ENCODE measurements at regions of chr2 and their contacts with region 1.

Region 1: GRCh38 chr2:96174251-96175144 is 29.3 kb upstream of the DUSP2 start:
- DNase-seq: peak; percentile 72 to 75
- ATAC-seq: peak; percentile 97 to 99
- H3K4me3 ChIP-seq: no peak overlapping the region
- H3K27ac ChIP-seq: no peak overlapping the region
- H3K4me1 ChIP-seq: no peaks in the 10 kb centered on the region
- CTCF ChIP-seq: peak; percentile 83
- EP300 ChIP-seq: no peak
- POLR2A ChIP-seq: no peak
- RAD21 ChIP-seq: peak; percentile 86 to 88

Region 2: DNA sequence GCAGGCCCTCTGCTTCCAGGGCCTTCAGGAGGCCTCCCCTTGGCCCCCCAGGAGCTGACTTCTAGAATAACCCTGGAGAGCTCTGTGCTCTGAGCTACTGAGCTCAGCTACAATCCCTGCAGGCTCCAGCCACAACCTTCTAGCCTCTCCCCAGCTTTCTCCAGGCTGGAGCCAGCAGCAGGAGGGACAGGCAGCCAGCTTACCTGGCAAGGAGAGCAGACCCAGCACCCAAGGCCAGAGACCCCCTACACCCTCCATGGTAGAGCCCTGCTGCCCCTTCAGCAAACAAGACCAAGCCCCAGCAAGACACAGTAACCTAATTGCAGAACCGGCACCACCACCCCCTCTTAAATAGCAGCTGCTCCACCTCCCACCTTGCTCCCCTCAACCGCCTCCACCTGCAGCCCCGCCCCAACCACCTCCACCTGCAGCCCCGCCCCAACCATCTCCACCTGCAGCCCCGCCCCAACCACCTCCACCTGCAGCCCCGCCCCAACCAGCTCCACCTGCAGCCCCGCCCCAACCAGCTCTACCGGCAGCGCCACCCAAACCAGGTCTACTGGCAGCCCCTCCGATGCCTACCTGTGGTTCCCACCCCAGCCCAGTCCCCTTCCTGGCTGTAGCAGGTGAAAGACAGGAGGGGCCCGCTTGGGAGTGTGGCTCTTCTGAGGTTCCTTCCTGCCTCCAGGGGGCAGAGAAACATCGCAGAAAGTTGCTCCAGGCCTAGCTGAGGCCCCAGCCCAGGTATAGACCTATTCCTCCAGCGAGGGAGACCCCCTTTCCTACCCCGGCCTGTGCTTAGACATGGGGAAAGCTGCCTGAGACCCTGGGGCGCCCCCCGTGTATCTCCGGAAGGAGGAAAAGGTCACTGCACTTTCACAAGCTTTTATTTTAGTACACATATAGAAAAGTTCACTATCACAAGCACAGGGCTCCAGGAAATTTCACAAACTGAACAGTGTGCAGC is 36.0 kb before region 1 on chr2 and contains the start of gene ASTL:
- CTCF ChIA-PET with region 1: interaction called, 57 read pairs
- POLR2A ChIA-PET with region 1: no interaction called
- DNase-seq: peak; percentile 31 to 39
- ATAC-seq: peak; percentile 64 to 86; a peak in 4 of 6 replicates
- H3K4me3 ChIP-seq: no peak within 1 kb of the TSS
- H3K27ac ChIP-seq: no peak within 1 kb of the TSS
- H3K4me1 ChIP-seq: no peaks in the 10 kb centered on the region
- CTCF ChIP-seq: peak; percentile 48; the same call in 2 of the 3 replicates
- EP300 ChIP-seq: no peak
- POLR2A ChIP-seq: no peak
- RAD21 ChIP-seq: peak; percentile 65 to 76
- polyA plus RNA-seq, gene ASTL: not detected in 2 replicates

Region 3: DNA sequence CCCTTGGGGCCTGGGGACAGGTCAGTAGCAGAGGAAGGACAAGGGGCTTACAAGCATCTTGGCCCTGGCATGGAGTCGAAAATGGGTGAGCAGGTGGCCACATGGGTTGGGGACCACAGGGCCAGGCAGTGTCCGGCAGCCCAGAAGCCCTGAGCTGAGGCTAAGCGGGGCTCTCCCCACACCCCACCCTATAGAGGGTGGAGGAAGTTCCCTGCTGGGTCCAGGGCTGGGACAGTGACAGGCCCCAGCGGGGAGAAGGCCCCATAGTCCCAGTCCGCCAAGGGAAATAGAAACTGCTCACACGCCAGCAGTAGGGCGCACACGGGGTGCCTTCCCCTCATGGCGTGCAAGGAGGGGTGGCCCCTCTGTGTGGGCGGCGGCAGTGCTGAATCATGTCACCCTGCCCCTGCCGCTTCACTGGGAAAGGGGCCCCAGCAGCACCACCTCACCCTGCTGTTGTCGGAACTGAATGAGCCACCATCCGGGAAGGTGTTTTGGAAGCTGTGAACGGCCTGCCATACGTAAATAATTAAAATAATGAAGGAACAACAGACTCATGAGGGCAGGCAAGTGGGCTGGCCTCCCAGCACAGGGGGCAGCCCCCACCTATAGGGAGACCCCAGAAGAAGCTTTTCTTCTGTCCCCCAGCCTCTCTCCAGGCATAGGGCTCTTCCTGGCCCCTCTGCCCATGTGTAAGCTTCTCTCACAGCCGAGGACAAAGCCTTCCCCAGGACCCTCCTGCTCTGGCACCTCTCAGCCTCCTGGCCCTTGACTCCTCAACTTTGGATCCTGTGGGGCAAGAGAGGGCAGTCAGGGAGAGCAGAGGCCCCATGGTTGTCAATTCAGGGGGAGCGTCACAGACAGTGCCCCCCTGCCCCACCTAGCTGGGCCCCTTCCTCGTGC is 16.6 kb before region 1 on chr2:
- CTCF ChIA-PET with region 1: interaction called, 27 read pairs
- POLR2A ChIA-PET with region 1: no interaction called
- DNase-seq: no peak
- ATAC-seq: peak in 1 of 2 experiments; percentile 11; a peak in 1 of 6 replicates
- H3K4me3 ChIP-seq: no peak overlapping the region
- H3K27ac ChIP-seq: no peak overlapping the region
- H3K4me1 ChIP-seq: no peaks in the 10 kb centered on the region
- CTCF ChIP-seq: no peak
- EP300 ChIP-seq: no peak
- POLR2A ChIP-seq: no peak
- RAD21 ChIP-seq: no peak

Region 4: GRCh38 chr2:96191937-96192670 is 17.6 kb after region 1 on chr2:
- CTCF ChIA-PET with region 1: interaction called, 30 read pairs
- POLR2A ChIA-PET with region 1: no interaction called
- DNase-seq: no peak
- ATAC-seq: no peak
- H3K4me3 ChIP-seq: no peak overlapping the region
- H3K27ac ChIP-seq: no peak overlapping the region
- H3K4me1 ChIP-seq: peaks cover 16% of the 10 kb centered on the region
- CTCF ChIP-seq: no peak
- EP300 ChIP-seq: no peak
- POLR2A ChIP-seq: no peak
- RAD21 ChIP-seq: no peak

Region 5: DNA sequence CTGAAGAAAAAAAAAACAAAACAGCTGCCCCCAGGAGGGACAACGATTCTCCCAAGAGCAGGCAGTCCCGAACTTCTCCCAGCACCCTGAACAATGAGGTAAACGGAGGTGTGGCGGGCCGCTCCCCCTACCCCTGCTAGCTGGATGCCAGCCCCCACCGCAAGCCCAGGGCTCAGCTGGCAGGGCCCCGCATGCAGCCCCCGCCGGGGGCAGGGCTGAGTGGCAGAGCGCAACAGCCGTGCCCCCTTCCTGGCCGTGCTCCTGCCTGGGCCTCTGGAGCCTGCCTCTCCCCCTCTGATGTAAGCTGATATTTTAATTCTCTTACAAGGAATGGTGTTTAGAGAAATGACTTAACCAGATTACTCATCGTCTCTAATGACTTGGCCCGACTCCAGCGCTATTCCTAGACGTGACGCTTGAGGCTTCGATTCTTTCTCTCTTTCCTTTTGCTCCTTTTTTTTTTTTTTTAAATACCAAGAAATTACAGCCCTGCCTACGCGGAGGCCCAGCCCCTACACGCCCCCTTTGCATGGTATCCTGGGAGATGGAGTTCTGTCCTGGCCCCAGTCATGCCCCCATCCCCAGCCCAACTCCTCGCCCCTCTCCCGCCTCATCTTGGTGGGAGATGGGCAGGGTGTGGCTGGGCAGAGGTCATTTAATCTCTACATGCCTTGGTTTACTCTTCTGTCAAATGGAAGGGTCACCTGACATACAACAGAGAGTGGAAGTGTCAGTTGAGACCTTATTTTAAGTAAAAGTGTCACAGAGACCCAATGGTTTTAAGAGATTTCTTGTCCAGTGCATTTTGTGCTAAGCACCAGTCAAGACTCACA is 357.6 kb after region 1 on chr2:
- CTCF ChIA-PET with region 1: no interaction called
- POLR2A ChIA-PET with region 1: no interaction called
- DNase-seq: peak; percentile 58 to 83
- ATAC-seq: peak; percentile 35 to 58; a peak in 4 of 6 replicates
- H3K4me3 ChIP-seq: 0 out of 3 replicates have a peak overlapping the region, but pooled peaks have one; percentile 23
- H3K27ac ChIP-seq: peak overlapping the region in 1 of 2 experiments; percentile 74; a peak in 4 of 6 replicates
- H3K4me1 ChIP-seq: peaks cover 27% of the 10 kb centered on the region
- CTCF ChIP-seq: no peak
- EP300 ChIP-seq: no peak
- POLR2A ChIP-seq: no peak
- RAD21 ChIP-seq: no peak